Left cardiac atrium (tissue), 4 donors: ENCODE measurements at regions of chr10 and their contacts with region 1.

Region 1: DNA sequence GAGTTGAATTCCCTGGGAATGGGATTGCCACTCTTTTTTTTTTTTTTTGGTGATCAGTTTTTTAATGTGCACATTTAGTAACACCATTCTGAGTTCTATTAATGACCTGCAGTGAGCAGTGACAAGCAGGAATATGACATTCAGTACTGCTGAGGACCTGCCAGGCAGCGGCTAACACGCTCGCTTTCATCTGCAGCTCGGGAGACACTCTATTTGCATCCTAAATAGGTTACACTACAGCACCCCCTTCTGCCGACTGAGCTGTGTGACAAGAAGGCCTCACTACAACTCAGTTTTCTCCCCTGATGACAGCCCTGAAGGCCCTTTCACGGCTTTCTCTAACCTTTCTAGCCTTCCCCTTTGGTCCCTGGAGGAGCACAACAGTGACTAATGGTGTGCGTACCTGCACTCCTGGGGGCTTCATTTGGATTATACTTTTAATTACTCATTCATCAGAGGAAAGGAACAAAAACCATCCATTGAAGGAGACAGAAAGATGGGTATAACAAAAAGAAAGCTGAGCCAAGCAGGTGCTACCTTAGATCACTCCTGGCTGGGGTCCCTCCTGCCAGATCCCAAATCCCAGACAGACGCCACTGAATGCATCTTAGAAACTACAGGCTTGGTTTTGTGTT is 872.4 kb downstream of the LRMDA start:
- DNase-seq: peak; percentile 82
- ATAC-seq: peak; percentile 96

Region 2: GRCh38 chr10:76036111-76036940 is 267.5 kb before region 1 on chr10:
- intact Hi-C with region 1: loop called (anchors 2 to 10 kb)
- DNase-seq: peak; percentile 71
- ATAC-seq: peak; percentile 87 to 88

Region 3: DNA sequence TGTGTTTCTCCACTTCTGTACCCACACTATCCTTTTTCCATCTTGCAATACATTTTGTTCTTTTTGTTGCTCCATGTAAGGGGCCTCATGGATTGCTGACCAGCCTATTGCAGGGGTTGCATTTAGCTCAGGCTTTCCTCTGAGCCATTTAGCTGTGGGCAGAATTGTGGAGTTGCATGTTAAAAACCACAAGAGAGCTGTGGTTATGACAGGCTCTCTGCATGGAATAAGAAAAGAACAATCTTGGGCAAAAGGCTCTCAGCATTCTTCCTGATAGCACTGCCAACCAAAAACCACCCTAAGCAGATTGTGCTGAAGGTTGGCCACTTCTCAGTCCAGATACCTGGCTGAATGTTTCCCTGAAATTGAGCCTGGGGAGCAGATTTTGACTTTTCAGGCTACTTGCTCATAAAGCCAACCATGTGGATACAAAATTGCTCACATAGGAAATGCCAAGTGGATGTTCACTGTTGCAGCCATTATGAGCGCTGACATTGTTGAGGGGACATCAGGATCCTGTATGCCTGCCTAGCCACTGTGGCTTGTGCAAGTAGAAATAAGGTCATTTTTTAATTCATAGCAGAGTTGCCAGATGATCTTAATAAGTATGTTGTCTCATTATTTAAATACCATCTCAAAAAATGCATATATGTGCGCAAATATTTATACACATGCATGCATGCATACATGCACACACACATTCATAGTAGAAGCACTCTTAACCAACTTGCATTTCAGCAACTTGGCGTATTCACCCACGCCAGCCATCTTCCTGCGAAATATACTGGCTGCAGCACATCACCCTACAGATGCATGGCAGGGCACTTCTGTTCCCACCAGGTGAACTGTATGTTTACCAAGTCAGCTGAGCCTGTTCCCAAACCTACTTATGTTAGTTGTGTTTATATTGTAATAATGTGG is 176.9 kb before region 1 on chr10:
- intact Hi-C with region 1: loop called in 1 of 2 experiments (anchors 10 kb)
- DNase-seq: no peak
- ATAC-seq: no peak

Region 4: DNA sequence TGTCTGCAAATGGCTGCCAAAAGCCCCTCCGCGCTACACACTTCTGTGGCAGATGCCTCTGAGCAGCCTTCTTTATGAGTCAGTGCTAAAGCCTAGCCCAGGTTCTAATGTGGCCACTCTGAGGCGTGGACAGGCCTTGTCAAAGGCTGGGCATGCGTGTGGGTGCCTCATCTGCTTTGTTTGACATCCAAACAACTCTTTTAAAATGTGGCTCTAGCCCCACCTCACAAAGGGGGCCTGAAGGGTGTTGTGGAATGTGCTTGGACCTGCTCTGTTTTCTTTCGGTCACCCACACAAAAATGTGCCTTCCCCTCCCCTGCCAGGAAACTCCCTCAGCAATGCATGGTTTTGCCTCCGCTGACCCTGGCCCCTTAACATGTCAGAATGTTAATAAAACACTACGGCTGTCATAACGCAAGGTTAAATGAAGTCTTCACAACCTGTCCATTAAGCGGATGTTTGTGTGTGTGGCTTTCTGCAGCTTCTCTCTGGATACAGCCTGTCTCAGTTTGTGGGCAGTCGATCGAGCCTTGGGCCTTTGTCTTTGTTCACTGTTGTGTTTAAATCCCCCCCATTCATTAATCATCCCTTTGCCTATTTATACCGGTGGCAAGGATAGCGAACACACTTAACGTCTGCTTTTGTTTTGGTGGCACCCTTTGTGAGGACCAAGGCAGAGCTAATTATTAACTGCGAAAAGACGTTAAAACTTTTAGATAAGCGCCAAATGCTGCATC is 153.5 kb before region 1 on chr10:
- intact Hi-C with region 1: no loop called
- DNase-seq: no peak
- ATAC-seq: peak; percentile 59 to 73

Region 5: GRCh38 chr10:76547352-76547972 is 243.7 kb after region 1 on chr10:
- intact Hi-C with region 1: loop called (anchors 5 to 10 kb)
- DNase-seq: peak; percentile 84
- ATAC-seq: peak; percentile 65 to 71

Region 6: DNA sequence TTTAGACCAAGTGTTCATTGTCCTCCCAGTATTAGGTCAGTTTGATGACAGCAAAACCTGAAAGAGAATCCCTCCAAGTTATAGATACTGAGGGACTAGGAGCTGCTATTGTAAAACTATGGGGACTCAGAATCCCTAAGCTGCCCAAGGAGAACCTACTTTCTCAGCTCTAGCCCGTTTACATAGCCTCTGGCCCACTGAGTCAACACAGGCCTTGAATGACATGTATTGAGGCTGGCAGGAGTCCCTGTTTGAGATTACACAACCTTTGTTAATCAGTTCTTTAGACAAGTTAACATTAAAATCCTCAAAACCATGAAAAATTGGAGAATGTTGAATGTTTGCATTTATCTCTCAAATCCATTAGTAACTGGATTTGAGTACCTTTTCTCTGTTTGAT is 254.8 kb after region 1 on chr10:
- intact Hi-C with region 1: loop called in 1 of 2 experiments (anchors 10 kb)
- DNase-seq: no peak
- ATAC-seq: peak; percentile 20 to 51